ENCODE measurements at regions of chr17 and their contacts with region 1.

Region 1: GRCh38 chr17:61927200-61928165 is at the start of gene INTS2:
- DNase-seq: peak; percentile 92
- ATAC-seq: peak; percentile 92
- H3K4me3 Mint-ChIP-seq: peak within 1 kb of the TSS; percentile 90
- H3K27ac Mint-ChIP-seq: peak within 1 kb of the TSS; percentile 93
- H3K4me1 Mint-ChIP-seq: peaks cover 17% of the 10 kb centered on the region
- H3K27me3 Mint-ChIP-seq: no peaks in the 10 kb centered on the region
- CTCF ChIP-seq: no peak
- total RNA-seq, gene INTS2: 21.4 and 21.8 TPM in 2 replicates

Region 2: DNA sequence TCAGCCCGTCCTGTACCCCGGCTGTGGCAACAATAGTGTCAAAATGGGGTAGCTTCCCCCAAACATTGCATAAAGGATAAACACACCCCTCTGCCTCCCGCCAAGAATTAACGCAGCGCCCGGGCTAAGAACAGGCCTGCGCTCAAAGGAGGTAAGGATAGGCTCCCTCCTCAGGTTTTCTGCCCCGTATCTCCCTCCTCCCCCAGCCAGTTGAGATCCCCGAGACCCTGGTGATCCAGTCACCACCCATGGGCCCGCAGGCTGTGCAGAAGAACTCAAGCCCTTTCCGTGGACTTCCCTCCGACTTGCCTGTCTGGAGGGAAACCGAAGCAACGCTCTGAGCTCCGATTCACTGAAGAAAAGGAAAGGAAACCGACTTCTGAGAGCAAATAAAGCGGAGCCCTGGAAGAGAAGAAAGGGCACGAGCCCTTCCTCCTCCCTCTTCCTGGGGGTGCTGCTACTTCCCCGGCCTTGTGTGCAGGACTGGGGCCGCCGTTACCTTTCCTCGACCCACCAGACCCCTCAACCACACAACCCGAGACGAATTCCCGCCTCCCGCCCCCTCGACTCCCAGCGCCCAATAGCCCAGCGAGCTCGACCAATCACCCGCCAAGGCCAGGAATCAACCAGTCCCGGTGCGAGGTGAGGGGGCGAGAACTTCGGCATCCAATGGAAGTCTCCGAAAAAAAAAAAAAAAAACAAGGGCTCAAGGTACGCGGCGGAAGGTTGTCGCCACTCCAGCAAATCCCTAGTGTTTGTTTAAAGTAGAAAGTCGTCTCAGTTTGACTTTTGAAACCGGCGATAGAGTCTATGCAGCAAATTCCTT is 64.3 kb before region 1 on chr17 and contains the start of gene BRIP1:
- CTCF ChIA-PET with region 1: no interaction called
- POLR2A ChIA-PET with region 1: interaction called, 3 read pairs
- intact Hi-C with region 1: loop called (anchors 1 kb)
- DNase-seq: peak; percentile 70
- ATAC-seq: peak; percentile 99
- H3K4me3 Mint-ChIP-seq: peak within 1 kb of the TSS; percentile 94
- H3K27ac Mint-ChIP-seq: peak within 1 kb of the TSS; percentile 83
- H3K4me1 Mint-ChIP-seq: peaks cover 18% of the 10 kb centered on the region
- H3K27me3 Mint-ChIP-seq: no peaks in the 10 kb centered on the region
- CTCF ChIP-seq: no peak
- total RNA-seq, gene BRIP1: 2.0 and 2.5 TPM in 2 replicates

Region 3: DNA sequence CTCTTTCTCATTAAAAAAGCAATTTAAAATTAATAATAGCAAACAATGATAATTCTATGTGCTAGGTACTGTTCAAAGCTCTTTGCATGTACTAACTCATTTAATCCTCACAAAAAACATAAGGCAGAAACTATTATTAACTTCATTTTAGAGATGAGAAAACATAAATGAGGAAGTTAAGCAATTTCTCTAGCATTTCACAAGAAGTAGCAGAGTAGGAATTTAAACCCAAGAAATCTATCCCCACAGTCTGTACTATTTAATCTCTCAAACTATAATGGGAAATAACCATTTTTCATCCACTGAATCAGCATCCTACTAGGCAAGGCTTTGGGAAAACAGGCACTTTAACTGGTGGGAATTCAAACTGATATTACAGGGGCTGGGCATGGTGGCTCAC is 42.5 kb after region 1 on chr17:
- CTCF ChIA-PET with region 1: no interaction called
- POLR2A ChIA-PET with region 1: no interaction called
- intact Hi-C with region 1: no loop called
- DNase-seq: no peak
- ATAC-seq: no peak
- H3K4me3 Mint-ChIP-seq: no peak overlapping the region
- H3K27ac Mint-ChIP-seq: no peak overlapping the region
- H3K4me1 Mint-ChIP-seq: peaks cover 3% of the 10 kb centered on the region
- H3K27me3 Mint-ChIP-seq: no peaks in the 10 kb centered on the region
- CTCF ChIP-seq: no peak